Right ventricle myocardium inferior (tissue), 1 donor: ENCODE measurements at regions of chr9 and their contacts with region 1.

Region 1: GRCh38 chr9:34710023-34710422 is at the start of gene CCL21:
- DNase-seq: peak; percentile 80
- ATAC-seq: peak; percentile 92
- total RNA-seq, gene CCL21: 12.4 TPM

Region 2: DNA sequence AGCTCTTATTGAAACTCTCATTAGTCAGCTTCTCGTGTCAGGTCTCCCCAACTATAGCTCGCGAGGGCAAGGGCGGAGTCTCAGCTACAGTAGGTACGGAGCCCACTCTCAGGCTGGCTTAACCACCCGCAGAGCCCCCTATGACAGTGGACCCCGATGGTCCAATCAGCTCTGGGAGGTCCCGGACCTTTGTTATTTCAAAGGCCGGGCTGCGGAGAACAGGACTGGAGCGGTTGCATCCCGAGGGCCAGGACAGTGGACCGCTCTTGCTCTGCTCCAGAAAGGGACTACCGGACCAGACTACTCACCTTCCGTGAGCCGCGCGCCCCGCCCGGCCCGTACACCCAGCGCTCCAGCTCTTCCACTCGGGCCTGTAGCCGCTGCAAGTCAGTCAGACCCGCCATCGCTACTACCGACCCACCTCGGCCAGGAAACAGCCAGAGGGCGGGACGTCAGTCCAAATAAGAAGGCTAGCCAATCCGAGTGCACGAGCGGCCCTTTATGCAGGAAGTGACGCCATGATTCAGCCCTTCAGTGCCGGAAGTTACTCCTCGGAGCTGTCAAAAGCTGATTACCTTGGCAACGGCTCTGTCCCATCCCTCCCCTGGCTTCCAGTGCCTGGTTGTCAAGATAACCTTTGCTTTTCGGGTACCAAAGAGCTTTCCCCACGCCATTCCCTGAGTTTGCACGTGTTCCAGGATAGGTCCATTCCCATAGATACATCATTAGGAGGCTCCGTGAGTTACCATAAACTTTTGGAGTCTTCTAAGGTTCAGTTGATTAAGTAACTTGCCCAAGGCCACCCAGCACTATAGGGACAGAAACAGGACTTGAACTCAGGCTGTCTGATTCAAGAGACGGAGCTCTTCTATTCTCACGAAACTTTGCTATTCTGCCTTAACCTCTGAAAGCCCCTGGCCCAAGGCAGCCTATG is 89.7 kb before region 1 on chr9 and contains the start of gene DCTN3:
- intact Hi-C with region 1: no loop called
- DNase-seq: peak; percentile 97
- ATAC-seq: peak; percentile 96
- total RNA-seq, gene DCTN3: 133 TPM

Region 3: DNA sequence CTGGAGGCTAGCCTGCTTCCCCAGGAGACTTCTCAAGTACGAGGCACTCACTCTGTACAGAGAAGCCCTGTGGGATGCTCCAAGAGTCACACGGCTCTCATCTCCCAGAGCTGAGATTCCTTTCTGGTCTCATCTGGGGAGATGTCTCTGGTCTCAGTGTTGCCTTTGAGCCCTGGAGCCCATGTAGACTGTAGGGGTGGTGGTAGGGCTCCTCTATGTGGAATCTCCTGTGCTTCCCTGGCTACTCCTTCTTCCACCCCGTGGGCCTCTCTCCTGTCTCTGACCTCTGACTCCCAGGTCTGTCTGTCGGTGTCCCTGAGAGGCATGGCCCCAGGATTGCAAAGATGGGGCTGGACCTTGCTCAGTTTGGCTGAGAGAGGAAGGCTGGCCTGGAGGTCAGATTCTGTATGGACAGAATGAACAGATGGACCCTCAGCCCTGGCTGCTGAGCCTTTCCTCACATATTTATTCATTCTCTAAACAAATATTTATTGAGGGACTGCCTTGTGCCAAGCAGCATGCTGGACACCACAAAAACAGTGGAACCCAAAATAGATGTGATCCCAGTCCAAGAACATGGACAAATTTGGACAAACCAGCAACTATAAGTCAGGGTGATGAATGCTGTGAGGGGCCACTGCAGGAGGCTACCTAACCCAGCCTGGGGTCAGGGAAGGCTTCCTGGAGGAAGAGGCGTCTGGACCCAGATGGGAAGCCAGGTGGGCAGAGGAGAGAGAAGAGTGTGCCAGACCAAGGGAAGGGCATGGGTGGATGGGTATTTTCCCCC is 21.5 kb before region 1 on chr9:
- intact Hi-C with region 1: loop called (anchors 1 kb)
- DNase-seq: no peak
- ATAC-seq: no peak

Region 4: DNA sequence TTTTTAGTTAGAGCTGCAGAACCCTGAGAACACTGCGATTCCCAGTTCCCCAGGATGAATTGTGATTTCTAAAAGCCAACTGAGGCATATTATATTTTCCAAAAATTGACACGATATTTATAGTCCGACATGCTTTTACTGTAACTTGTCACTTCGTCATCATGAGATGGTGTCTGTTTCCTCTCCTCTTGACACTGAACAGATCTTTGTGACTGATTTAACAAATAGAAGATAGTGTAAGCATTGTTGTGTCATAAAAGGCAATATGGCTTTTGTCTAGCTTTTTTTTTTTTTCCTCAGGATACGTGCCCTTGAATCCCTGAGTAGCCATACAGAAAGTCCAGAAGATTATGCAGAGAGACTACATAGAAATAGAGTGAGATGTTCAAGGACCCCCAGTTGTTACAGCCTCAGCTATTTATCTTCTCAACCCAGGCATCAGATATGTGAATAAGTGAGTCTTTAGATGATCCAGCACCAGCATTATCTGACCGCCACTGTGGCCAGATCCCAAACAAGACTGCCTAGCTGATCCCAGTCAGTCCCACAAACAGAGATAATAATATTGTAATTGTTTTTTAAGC is 27.7 kb after region 1 on chr9:
- intact Hi-C with region 1: no loop called
- DNase-seq: no peak
- ATAC-seq: no peak

Region 5: DNA sequence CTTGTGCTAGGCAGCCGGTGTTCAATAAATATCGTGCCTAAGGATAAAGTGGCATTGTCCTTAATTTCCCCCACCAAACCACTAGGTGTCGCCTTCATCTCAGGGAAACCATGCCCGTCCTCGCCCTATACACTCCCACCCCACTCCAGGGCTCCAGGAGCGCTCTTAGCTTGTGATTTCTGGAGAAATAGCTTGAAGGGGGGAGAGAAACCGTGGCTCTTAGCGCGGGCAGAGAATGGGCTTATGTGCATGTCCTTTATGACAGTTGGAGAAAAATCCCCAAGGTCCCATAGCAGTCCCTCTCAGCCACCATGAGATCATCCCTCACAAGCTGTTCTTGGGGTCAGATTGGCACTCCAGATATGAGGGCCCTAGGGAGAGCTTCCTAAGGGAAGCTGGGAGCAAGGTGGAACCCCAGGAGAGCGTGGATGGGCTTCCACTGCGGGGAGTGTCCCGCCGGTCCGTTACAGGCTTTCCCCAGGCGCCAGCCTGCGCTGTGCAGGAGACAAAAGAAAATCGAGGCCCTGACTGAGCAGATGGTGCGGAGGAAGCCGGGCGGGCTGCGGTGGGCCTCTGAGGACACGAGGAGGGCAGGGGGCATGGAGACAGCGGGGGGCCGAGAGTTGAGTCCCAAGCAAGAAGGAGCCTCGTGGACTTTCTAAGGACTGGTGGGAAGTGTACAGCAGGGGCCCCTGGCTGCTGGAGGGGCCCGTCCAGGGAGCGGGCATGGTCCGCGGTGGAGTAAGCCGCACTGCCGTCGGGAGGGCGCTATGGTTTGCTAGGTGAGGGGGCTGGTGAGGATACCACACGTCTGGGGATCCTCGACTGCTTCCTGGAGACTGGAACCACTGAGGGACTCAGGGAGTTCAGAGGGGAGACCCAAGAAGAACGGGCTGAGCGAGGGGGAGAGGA is 1080.6 kb after region 1 on chr9:
- intact Hi-C with region 1: no loop called
- DNase-seq: peak; percentile 77
- ATAC-seq: peak; percentile 90